K562 (cell line): ENCODE measurements at regions of chr3 and their contacts with region 1.

Region 1: GRCh38 chr3:134299185-134299887 is 48.7 kb upstream of the RYK start:
- DNase-seq: no peak
- ATAC-seq: peak; percentile 63; the same call in 2 of the 3 replicates
- H3K4me3 ChIP-seq: no peak overlapping the region
- H3K27ac ChIP-seq: no peak overlapping the region
- H3K4me1 ChIP-seq: no peaks in the 10 kb centered on the region
- H3K27me3 ChIP-seq: no peaks in the 10 kb centered on the region; a peak in 2 of 5 replicates
- CTCF ChIP-seq: peak in 1 of 3 experiments; percentile 35; a peak in 2 of 6 replicates
- EP300 ChIP-seq: no peak
- POLR2A ChIP-seq: no peak
- RAD21 ChIP-seq: peak in 1 of 2 experiments; percentile 36; a peak in 2 of 4 replicates

Region 2: GRCh38 chr3:133874344-133874743 is 425.0 kb before region 1 on chr3:
- CTCF ChIA-PET with region 1: no interaction called
- POLR2A ChIA-PET with region 1: no interaction called
- in situ Hi-C with region 1: no loop called
- intact Hi-C with region 1: no loop called
- DNase-seq: no peak
- ATAC-seq: peak; percentile 72
- H3K4me3 ChIP-seq: no peak overlapping the region
- H3K27ac ChIP-seq: peak overlapping the region; percentile 60; the same call in 2 of the 3 replicates
- H3K4me1 ChIP-seq: peaks cover 0 to 9% of the 10 kb centered on the region in 2 experiments; a peak in 3 of 5 replicates
- H3K27me3 ChIP-seq: no peaks in the 10 kb centered on the region
- CTCF ChIP-seq: no peak
- EP300 ChIP-seq: no peak
- POLR2A ChIP-seq: no peak
- RAD21 ChIP-seq: no peak

Region 3: GRCh38 chr3:134212906-134213665 is 86.2 kb before region 1 on chr3:
- CTCF ChIA-PET with region 1: interaction called, 5 read pairs
- POLR2A ChIA-PET with region 1: no interaction called
- in situ Hi-C with region 1: no loop called
- intact Hi-C with region 1: loop called (anchors 1 kb)
- DNase-seq: peak; percentile 62 to 77 (median 64)
- ATAC-seq: peak; percentile 96
- H3K4me3 ChIP-seq: no peak overlapping the region
- H3K27ac ChIP-seq: no peak overlapping the region
- H3K4me1 ChIP-seq: no peaks in the 10 kb centered on the region; a peak in 1 of 5 replicates
- H3K27me3 ChIP-seq: no peaks in the 10 kb centered on the region
- CTCF ChIP-seq: peak; percentile 79 to 81 (median 80)
- EP300 ChIP-seq: no peak
- POLR2A ChIP-seq: no peak
- RAD21 ChIP-seq: peak; percentile 51 to 72

Region 4: GRCh38 chr3:134258761-134259347 is 40.5 kb before region 1 on chr3:
- CTCF ChIA-PET with region 1: no interaction called
- POLR2A ChIA-PET with region 1: interaction called, 3 read pairs
- in situ Hi-C with region 1: no loop called
- intact Hi-C with region 1: loop called (anchors 5 kb)
- DNase-seq: no peak
- ATAC-seq: no peak
- H3K4me3 ChIP-seq: no peak overlapping the region
- H3K27ac ChIP-seq: no peak overlapping the region
- H3K4me1 ChIP-seq: no peaks in the 10 kb centered on the region
- H3K27me3 ChIP-seq: no peaks in the 10 kb centered on the region
- CTCF ChIP-seq: no peak
- EP300 ChIP-seq: no peak
- POLR2A ChIP-seq: no peak
- RAD21 ChIP-seq: no peak